Naive thymus-derived CD8-positive, alpha-beta T cell (primary cell): ENCODE measurements at regions of chr7 and their contacts with region 1.

Region 1: GRCh38 chr7:156892821-156893706 is at the start of gene LMBR1:
- DNase-seq: peak; percentile 89 to 97 (median 95)
- ATAC-seq: peak; percentile 82 to 83
- H3K4me3 Mint-ChIP-seq: peak within 1 kb of the TSS; percentile 86 to 95 (median 93)
- H3K27ac Mint-ChIP-seq: peak within 1 kb of the TSS; percentile 81 to 97 (median 92)
- H3K4me1 Mint-ChIP-seq: peaks cover 16 to 58% (median 48%) of the 10 kb centered on the region in 4 donors
- H3K27me3 Mint-ChIP-seq: no peaks in the 10 kb centered on the region
- polyA plus RNA-seq, gene LMBR1: 41.9 to 45.9 (median 44.3) TPM

Region 2: GRCh38 chr7:156903232-156903909 is 10.3 kb after region 1 on chr7:
- POLR2A ChIA-PET with region 1: interaction called, 44 read pairs
- DNase-seq: peak in 9 of 10 donors; percentile 35 to 81 (median 57)
- ATAC-seq: peak; percentile 96
- H3K4me3 Mint-ChIP-seq: peak overlapping the region; percentile 13 to 77 (median 68)
- H3K27ac Mint-ChIP-seq: peak overlapping the region; percentile 22 to 97 (median 90)
- H3K4me1 Mint-ChIP-seq: peaks cover 7 to 17% (median 12%) of the 10 kb centered on the region in 4 donors
- H3K27me3 Mint-ChIP-seq: peaks cover 0 to 4% (median 0%) of the 10 kb centered on the region in 5 donors

Region 3: DNA sequence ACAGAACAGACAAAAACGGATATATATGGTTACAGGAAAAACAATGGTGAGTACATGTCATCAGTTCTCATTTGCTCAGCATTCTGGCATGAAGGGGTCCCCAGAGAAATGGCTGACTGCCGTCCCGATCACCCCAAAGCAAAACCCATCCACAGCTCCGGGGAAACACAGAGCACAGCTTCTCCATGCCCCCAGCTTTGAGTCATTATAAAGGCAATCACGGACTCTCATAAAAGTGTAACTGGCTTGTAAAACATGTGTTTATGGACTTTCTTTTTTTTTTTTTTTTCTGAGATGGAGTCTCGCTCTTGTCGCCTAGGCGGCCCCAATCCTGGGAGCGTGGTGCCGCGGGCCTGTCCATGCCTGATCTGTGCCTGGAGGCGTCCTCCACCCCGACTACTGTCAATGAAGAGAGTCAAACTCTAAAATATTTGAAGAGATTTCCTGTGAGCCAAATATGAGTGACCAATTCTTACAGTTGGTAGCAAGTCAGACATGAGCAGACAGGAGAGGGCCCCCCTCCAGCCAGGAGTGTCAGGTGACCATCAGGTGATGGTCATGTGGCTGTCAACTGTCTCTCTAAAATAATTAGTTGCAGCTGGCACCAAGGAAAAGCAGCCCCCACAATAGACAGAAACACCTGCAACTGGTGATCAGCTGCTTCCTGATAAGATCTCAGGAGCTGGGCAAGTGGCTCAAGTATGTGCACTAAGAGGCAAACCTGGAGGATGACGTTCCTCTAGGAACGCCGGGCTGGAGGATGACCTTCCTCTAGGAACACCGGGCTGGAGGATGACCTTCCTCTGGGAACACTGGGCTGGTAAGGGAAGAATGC is 34.7 kb after region 1 on chr7:
- POLR2A ChIA-PET with region 1: interaction called, 10 read pairs
- DNase-seq: no peak
- ATAC-seq: no peak
- H3K4me3 Mint-ChIP-seq: no peak overlapping the region
- H3K27ac Mint-ChIP-seq: peak overlapping the region in 6 of 10 donors; percentile 28 to 80 (median 50)
- H3K4me1 Mint-ChIP-seq: peaks cover 18 to 43% (median 27%) of the 10 kb centered on the region in 4 donors
- H3K27me3 Mint-ChIP-seq: peaks cover 0 to 8% (median 2%) of the 10 kb centered on the region in 5 donors

Region 4: DNA sequence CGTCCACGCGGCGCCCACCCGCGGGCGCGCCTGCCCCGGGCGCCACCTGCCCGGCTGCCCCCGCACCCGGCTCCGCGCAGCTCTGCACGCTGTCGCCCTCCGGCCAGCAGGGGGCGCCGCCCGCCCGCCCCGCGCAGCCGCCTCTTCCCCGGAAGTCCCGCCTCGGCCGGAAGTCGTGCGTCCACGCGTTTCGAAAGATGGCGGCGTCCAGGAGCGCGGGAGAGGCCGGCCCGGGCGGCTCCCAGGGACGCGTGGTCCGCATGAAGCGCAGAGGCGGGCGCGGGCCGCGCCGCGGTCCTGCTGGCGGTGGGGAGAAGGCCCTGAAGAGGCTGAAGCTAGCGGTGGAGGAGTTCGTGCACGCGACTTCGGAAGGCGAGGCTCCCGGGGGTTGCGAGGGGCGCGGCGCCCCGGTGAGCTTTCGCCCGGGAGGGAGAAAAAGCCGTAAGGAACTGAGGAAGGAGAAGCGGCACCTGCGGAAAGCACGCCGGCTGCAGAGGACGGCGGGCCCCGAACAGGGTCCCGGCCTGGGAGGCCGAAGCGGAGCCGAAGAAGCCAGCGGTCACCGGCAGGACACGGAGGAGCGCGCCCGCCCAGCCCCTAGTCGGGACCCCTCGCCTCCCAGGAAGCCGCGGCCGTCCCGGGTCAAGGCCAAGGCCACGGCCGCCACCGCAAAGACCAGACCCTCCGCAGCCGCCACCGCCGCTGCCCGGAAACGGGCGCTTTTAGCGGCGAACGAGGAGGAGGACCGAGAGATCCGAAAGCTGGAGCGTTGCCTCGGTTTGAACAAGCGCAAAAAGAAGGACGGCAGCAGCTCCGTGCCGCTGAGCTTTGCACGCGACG is 56.7 kb after region 1 on chr7 and contains the start of gene NOM1:
- POLR2A ChIA-PET with region 1: interaction called, 15 read pairs
- DNase-seq: peak; percentile 82 to 98 (median 91)
- ATAC-seq: peak; percentile 94 to 96
- H3K4me3 Mint-ChIP-seq: peak within 1 kb of the TSS; percentile 90 to 99 (median 96)
- H3K27ac Mint-ChIP-seq: peak within 1 kb of the TSS; percentile 76 to 98 (median 90)
- H3K4me1 Mint-ChIP-seq: peaks cover 5 to 42% (median 24%) of the 10 kb centered on the region in 4 donors
- H3K27me3 Mint-ChIP-seq: peaks cover 0 to 14% (median 8%) of the 10 kb centered on the region in 5 donors
- polyA plus RNA-seq, gene NOM1: 2.2 to 7.2 (median 6.6) TPM

Region 5: DNA sequence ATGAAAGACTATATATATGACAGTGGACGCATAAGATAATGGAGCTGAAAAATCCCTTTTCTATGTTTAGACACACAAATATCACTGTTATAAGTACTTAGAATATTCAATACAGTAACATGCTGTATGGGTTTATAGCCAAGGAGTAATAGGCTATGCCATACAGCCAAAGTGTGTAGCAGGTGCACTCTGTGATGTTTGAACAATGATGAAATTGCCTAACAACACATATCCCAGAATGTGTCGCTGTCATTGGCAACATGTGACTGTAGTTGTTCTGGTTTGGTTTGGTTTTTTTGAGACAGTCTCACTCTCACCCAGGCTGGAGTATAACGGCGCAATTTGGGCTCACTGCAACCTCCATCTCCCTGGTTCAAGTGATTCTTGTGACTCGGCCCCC is 82.6 kb after region 1 on chr7:
- POLR2A ChIA-PET with region 1: no interaction called
- DNase-seq: no peak
- ATAC-seq: no peak
- H3K4me3 Mint-ChIP-seq: no peak overlapping the region
- H3K27ac Mint-ChIP-seq: no peak overlapping the region
- H3K4me1 Mint-ChIP-seq: peaks cover 0 to 1% (median 0%) of the 10 kb centered on the region in 4 donors
- H3K27me3 Mint-ChIP-seq: no peaks in the 10 kb centered on the region